ENCODE measurements at regions of chr17 and their contacts with region 1.

Region 1: DNA sequence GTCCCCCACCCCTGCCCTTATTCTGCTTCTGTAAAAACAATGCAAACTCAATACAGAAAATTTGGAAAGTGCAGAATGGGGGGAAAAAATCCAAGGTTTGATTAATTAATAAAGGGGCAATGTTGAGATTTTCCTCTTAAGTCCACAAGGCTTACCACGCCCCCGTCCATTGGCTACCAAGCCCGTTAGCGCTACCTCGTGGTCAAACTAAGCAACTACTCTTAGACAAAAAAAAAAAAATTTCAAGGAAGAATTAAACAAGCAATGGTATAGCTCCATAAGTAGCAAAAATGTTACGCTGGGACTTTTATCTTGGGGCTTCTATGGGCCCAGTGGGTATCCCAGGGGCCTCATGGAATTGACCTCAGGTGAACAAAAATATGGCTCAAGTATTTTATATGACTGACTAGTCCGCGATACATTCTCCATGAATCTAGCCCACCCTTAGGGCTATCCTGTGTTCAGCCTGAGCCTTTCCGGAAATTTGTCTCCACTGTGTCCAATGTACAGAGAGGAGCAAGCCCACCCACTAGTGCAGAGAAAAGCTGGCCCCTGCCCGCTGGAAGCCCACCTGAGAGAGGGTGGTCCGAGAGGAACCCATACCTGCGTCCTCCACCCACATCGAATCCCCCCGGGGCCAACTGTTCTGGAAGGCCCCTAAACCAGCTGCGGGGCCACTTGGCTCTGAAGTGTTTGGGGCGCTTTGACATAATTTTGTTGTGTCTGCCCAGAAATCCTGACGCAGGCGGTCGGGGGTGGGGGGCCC is 19.1 kb upstream of the TEX2 start:
- DNase-seq: peak; percentile 45 to 72 (median 67)
- H3K4me3 ChIP-seq: no peak overlapping the region
- H3K27ac ChIP-seq: no peak overlapping the region
- H3K4me1 ChIP-seq: peaks cover 5 to 19% of the 10 kb centered on the region in 2 donors
- H3K27me3 ChIP-seq: no peaks in the 10 kb centered on the region
- CTCF ChIP-seq: peak; percentile 58 to 92 (median 77)
- POLR2A ChIP-seq: no peak

Region 2: DNA sequence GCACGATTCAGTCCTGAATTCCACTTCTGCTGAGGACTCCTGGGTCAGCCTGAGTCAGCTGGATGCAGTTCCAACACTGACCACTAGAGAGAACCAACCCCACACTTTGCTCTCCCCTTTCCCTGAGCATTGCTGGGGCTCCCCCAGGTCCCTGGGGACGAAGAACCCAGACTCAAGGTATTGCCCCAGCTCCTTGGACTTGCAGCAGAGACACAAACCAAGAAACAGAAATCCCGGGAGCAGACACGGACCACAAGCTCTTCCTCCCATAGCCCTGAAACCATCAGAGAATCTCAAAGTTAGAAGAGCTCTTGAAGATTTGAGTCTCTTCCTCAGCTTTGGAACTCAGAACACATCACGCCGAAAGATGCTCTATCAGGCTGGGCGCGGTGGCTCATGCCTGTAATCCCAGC is 362.8 kb before region 1 on chr17:
- intact Hi-C with region 1: loop called in 1 of 2 experiments (anchors 10 kb)
- DNase-seq: peak; percentile 53 to 80 (median 67)
- H3K4me3 ChIP-seq: no peak overlapping the region
- H3K27ac ChIP-seq: no peak overlapping the region
- H3K4me1 ChIP-seq: no peaks in the 10 kb centered on the region
- H3K27me3 ChIP-seq: no peaks in the 10 kb centered on the region
- CTCF ChIP-seq: peak; percentile 92 to 98 (median 94)
- POLR2A ChIP-seq: no peak

Region 3: DNA sequence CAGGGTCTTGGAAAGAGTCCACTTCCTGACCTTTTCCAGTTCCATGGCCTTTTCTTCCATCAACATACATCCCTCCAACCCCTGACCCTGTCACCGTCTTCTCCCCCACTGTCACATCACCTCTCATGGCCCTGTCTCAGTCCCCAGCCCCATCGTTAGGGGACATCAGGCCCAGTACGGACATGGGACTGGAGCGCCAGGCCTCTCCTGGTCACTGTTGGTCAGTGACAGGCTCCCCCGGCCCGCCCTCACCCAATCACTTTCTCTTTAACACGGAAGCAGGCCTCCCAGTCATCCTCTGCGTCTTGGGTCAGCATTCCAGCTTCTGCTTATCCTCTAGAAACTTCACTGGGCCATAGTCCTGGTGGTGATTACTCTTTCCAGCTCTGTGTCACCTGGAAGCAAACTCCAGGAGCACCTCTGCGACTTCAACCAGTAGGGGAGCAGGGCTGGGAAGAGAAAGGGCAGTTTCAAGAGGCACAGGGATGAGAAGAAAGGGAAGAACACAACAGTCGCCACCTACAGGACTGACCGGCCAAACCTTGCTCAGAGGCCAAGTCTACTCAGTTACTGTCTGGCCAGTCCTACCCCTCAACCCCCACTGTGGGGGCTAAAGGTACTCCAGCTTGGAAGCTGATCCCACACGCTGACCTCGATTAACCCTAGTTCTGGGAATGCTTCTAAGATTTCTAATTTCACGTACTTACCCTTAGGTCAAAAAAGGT is 245.8 kb before region 1 on chr17:
- intact Hi-C with region 1: loop called in 1 of 2 experiments (anchors 10 kb)
- DNase-seq: peak in 1 of 7 donors; percentile 46
- H3K4me3 ChIP-seq: no peak overlapping the region
- H3K27ac ChIP-seq: no peak overlapping the region
- H3K4me1 ChIP-seq: no peaks in the 10 kb centered on the region
- H3K27me3 ChIP-seq: no peaks in the 10 kb centered on the region
- CTCF ChIP-seq: no peak
- POLR2A ChIP-seq: no peak

Region 4: GRCh38 chr17:64063766-64064224 is 218.3 kb before region 1 on chr17:
- intact Hi-C with region 1: loop called in 1 of 2 experiments (anchors 10 kb)
- DNase-seq: peak; percentile 58 to 85 (median 73)
- H3K4me3 ChIP-seq: no peak overlapping the region
- H3K27ac ChIP-seq: peak overlapping the region in 4 of 5 donors; percentile 35 to 75 (median 62)
- H3K4me1 ChIP-seq: peaks cover 8 to 47% of the 10 kb centered on the region in 2 donors
- H3K27me3 ChIP-seq: no peaks in the 10 kb centered on the region
- CTCF ChIP-seq: peak; percentile 23 to 67 (median 54)
- POLR2A ChIP-seq: peak in 1 of 2 donors; percentile 5

Region 5: DNA sequence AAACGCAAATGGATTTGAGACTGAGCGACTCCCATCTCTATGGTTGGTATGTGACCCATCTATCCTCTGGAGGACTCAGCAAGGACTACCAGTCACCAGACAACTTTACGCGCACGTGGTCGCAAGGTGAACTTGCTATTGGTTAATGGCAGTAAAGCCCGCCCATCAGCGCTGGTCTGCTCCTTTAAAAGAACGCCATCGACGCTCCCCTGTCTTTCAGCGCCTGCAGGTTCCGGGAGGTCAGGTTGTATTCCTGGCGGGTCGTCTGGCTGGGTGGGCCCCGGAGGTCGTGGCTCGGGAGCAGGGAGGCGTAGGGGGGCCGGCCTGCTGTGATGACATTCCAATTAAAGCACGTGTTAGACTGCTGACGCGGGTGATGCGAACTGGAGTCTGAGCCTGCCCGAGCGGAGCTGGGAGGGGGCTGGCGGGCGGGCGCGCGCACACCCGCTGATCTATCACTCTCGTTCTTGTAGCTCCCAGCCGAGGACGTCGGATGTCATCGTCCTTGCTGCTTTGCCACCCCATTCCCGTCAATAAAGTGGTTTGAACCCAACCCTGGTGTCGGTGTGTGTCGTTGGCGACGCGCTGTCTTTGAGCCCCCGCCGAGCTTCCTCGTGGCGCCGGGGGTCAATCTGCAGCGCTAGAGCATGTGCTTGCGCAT is 136.3 kb before region 1 on chr17:
- intact Hi-C with region 1: loop called (anchors 2 to 10 kb)
- DNase-seq: peak; percentile 95 to 100 (median 99)
- H3K4me3 ChIP-seq: peak overlapping the region; percentile 85 to 94 (median 90)
- H3K27ac ChIP-seq: peak overlapping the region; percentile 94 to 98 (median 96)
- H3K4me1 ChIP-seq: peaks cover 14 to 29% of the 10 kb centered on the region in 2 donors
- H3K27me3 ChIP-seq: no peaks in the 10 kb centered on the region
- CTCF ChIP-seq: peak in 3 of 6 experiments; percentile 6 to 36 (median 8)
- POLR2A ChIP-seq: peak; percentile 99

Region 6: GRCh38 chr17:64155751-64156544 is 126.2 kb before region 1 on chr17:
- intact Hi-C with region 1: loop called in 1 of 2 experiments (anchors 10 kb)
- DNase-seq: peak; percentile 66 to 93 (median 90)
- H3K4me3 ChIP-seq: peak overlapping the region in 1 of 4 donors; percentile 10
- H3K27ac ChIP-seq: peak overlapping the region; percentile 71 to 93 (median 92)
- H3K4me1 ChIP-seq: peaks cover 21 to 36% of the 10 kb centered on the region in 2 donors
- H3K27me3 ChIP-seq: no peaks in the 10 kb centered on the region
- CTCF ChIP-seq: no peak
- POLR2A ChIP-seq: peak in 1 of 2 donors; percentile 70